ENCODE measurements at regions of chrX and their contacts with region 1.

Region 1: DNA sequence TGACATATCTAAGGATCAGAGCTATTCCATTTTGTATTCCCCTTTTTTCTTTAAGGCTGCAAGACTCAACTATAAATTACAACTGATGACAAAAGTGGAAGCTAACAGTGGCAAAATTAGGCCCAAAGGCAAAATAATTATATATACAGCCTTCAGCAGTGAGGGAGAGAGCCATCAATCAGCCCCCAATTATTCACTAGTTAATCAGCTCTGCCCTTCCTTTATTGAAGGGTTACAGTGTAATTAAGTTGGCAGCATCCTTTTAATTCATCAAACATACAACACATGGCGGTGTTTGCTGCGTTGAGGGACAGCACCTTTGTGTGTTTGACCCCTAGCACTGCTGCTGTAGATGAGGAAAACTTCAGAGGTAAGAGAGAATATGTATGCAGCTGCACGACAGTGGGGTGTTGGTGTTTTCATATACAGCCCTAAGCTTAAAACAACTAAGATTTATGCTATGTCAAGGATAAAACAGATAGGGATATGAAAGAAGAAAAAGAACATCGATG is 973.9 kb upstream of the POU3F4 start:
- DNase-seq: no peak
- H3K4me3 Mint-ChIP-seq: no peak overlapping the region
- H3K27ac Mint-ChIP-seq: no peak overlapping the region
- H3K4me1 Mint-ChIP-seq: no peaks in the 10 kb centered on the region
- H3K27me3 Mint-ChIP-seq: no peaks in the 10 kb centered on the region

Region 2: GRCh38 chrX:82163701-82164100 is 370.4 kb before region 1 on chrX:
- CTCF ChIA-PET with region 1: no interaction called
- POLR2A ChIA-PET with region 1: no interaction called
- intact Hi-C with region 1: loop called (anchors 10 kb)
- DNase-seq: no peak
- H3K4me3 Mint-ChIP-seq: no peak overlapping the region
- H3K27ac Mint-ChIP-seq: no peak overlapping the region
- H3K4me1 Mint-ChIP-seq: no peaks in the 10 kb centered on the region
- H3K27me3 Mint-ChIP-seq: no peaks in the 10 kb centered on the region

Measured in activated CD4-positive, alpha-beta memory T cell treated with anti-CD3 and anti-CD28 coated beads for 36 hours (primary cell).